Mammary epithelial cell (primary cell): ENCODE measurements at regions of chr9 and their contacts with region 1.

Region 1: DNA sequence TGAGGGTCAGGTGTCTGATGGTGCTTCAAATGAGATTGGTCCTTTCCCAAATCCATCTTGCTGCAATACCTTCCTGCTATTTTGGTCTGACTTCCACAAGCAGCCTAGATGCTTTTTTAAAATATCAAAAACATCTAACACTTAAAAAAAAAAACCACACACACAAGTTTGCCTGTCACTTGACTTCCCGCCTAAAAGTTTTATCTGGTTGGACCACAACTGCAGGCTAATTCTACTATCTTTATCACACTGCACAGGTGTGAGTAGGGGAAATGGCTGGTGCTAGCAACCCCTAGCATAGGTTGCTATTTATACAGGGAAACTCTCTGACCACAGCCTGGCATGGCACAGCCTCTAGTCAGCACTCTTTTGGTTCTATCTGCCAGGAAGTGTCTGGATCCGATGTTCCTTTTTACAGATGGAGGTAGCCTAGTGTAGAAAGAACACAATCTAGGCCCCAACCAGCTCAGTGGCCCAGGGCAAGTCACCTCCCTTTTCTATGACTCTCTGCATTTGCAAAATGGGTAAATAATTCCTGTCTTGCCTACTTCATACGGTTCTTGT is at the start of gene HEMGN:
- DNase-seq: no peak
- H3K4me3 ChIP-seq: no peak within 1 kb of the TSS
- H3K27ac ChIP-seq: no peak within 1 kb of the TSS
- H3K4me1 ChIP-seq: no peaks in the 10 kb centered on the region
- H3K27me3 ChIP-seq: peaks cover 26% of the 10 kb centered on the region
- CTCF ChIP-seq: no peak
- total RNA-seq, gene HEMGN: not detected

Region 2: DNA sequence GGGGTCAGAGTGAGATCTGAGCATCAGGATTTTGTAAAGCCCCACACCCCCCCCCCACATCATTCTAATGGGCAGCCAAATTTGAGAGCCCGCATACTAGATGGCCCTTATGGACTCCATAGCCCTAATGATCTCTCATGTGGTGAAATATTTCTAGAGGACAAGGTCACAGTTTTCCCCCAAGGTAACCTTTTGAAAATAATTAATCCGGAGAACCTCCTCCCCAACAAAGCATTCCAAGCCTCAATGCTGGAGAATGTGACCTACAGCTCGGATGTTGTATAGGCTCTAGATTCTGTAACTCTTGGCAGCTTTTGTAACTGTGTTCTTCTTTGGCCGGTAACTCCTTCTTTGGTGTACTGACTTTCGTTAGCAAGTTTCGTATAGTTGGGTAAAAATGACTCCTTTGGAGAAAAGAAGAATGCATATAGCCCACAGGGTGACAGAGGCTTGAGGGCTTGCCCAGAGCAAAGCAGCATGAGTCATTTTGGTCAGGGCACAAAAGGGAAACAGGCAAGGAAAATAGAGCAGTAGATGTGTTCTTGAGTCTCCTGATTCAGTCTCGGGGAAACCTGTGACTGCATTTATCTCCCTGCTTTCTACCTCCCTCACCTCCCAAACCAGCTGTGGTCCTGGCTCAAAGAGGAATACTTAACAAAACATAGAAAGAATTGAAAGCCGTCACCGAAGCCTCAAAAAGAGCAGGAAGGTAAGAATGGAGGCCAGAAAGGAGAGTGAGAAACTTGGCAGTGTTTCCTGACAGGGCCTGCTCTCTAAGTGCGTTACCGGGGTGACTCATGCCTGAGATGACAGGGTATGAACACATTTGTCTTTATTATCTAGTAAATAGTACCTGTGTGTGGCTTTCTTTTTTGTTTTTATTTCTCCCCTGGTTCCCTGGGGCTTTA is 234.5 kb before region 1 on chr9:
- CTCF ChIA-PET with region 1: no interaction called
- dilution Hi-C with region 1: no loop called
- in situ Hi-C with region 1: no loop called
- intact Hi-C with region 1: no loop called
- DNase-seq: peak; percentile 94
- H3K4me3 ChIP-seq: peak overlapping the region in 1 of 3 experiments; percentile 15
- H3K27ac ChIP-seq: peak overlapping the region; percentile 73
- H3K4me1 ChIP-seq: peaks cover 37% of the 10 kb centered on the region
- H3K27me3 ChIP-seq: peaks cover 6% of the 10 kb centered on the region
- CTCF ChIP-seq: no peak

Region 3: DNA sequence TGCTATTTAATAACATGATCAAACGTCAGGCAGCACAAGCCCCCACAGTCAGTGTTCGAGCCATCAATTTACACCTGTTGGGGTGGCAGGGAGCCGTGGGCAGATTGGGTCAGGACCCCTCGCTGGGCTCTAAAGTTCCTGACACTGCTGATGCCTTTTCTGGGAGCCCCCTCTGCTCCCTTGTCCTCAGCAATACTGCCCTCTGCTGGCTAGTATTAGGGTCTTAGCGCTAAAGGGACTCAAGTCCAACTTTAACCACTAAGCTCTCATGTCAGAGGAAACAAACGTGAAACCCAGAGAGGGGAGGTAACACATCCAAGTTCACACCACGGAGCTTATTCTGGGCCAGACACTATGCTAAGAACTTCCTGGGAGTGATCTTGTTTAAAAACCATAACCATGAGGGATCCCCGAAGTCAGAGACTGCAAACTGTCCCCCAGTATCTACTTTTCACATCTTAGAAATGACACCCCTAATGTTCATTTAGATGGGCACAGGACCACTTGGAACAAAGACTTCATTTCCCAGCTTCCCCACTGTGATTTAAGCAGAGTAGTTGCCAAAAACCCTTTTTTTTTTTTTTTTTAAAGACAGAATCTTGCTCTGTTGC is 837.8 kb after region 1 on chr9:
- CTCF ChIA-PET with region 1: no interaction called
- dilution Hi-C with region 1: no loop called
- in situ Hi-C with region 1: loop called in 1 of 2 experiments (anchors 25 kb)
- intact Hi-C with region 1: no loop called
- DNase-seq: peak; percentile 20
- H3K4me3 ChIP-seq: no peak overlapping the region
- H3K27ac ChIP-seq: no peak overlapping the region
- H3K4me1 ChIP-seq: no peaks in the 10 kb centered on the region
- H3K27me3 ChIP-seq: no peaks in the 10 kb centered on the region
- CTCF ChIP-seq: peak; percentile 80 to 83